GM10248 (cell line): ENCODE measurements at regions of chr19 and their contacts with region 1.

Region 1: DNA sequence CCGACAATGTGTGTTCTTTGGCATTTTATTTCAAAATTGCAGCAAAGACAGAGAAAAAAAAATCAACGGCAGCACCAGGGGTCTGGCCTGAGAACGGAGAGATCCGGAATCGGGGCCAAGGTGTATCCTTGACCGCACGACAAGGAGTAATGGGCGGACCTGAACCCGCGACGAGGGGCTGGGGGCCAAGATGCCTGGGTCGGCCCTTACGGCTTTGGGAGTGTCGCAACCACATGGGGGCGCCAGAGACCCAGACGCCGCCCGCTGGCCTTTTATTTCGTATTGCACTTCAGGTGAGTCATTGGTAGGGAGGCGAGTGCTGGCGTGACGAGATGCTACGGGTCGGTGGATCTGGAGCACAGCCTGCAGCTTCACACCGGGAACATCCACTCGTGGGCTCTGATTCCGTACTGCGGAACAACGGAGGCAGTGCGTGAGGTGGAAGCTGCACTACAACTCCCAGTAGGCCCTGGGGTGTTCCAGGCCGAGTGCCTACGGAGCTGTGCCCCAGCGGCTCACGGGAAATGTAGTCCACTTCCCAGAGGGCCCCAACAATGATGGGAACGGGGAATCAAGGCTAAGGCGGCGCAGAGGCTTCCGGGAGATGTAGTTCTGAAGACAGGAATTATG is 15.7 kb downstream of the BCAT2 start:
- DNase-seq: peak; percentile 92
- CTCF ChIP-seq: peak; percentile 85

Region 2: GRCh38 chr19:48724796-48725753 is 70.1 kb before region 1 on chr19:
- CTCF ChIA-PET with region 1: no interaction called
- POLR2A ChIA-PET with region 1: no interaction called
- DNase-seq: peak; percentile 64
- CTCF ChIP-seq: no peak

Region 3: GRCh38 chr19:48806818-48807589 is 11.8 kb after region 1 on chr19:
- CTCF ChIA-PET with region 1: interaction called, 54 read pairs
- POLR2A ChIA-PET with region 1: no interaction called
- DNase-seq: no peak
- CTCF ChIP-seq: no peak

Region 4: DNA sequence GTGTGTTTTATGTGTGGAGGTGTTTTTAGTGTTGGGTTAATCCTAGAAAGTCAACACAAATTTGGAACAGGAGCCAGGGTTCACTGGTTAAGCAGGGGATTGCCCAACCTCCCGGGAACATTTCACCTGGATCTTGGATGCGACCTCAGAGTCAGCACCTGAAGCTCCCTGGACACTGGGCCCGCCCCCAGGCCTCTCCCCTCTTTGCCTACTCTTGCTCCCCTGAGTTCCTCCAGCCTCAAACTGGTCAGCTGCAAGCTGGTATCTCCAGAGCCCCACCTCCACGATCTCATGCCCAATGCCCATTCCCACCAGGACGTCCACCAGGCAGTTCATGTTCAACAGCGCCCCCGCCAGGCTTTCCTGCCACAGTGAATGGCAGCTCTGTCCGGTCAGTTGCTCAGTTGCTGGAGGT is 31.4 kb after region 1 on chr19:
- CTCF ChIA-PET with region 1: interaction called, 22 read pairs
- POLR2A ChIA-PET with region 1: interaction called, 5 read pairs
- DNase-seq: no peak
- CTCF ChIP-seq: no peak

Region 5: GRCh38 chr19:48970923-48971395 is 175.8 kb after region 1 on chr19:
- CTCF ChIA-PET with region 1: interaction called, 39 read pairs
- POLR2A ChIA-PET with region 1: no interaction called
- DNase-seq: peak; percentile 77
- CTCF ChIP-seq: peak; percentile 93